CD4-positive, alpha-beta memory T cell (primary cell): ENCODE measurements at regions of chr6 and their contacts with region 1.

Region 1: DNA sequence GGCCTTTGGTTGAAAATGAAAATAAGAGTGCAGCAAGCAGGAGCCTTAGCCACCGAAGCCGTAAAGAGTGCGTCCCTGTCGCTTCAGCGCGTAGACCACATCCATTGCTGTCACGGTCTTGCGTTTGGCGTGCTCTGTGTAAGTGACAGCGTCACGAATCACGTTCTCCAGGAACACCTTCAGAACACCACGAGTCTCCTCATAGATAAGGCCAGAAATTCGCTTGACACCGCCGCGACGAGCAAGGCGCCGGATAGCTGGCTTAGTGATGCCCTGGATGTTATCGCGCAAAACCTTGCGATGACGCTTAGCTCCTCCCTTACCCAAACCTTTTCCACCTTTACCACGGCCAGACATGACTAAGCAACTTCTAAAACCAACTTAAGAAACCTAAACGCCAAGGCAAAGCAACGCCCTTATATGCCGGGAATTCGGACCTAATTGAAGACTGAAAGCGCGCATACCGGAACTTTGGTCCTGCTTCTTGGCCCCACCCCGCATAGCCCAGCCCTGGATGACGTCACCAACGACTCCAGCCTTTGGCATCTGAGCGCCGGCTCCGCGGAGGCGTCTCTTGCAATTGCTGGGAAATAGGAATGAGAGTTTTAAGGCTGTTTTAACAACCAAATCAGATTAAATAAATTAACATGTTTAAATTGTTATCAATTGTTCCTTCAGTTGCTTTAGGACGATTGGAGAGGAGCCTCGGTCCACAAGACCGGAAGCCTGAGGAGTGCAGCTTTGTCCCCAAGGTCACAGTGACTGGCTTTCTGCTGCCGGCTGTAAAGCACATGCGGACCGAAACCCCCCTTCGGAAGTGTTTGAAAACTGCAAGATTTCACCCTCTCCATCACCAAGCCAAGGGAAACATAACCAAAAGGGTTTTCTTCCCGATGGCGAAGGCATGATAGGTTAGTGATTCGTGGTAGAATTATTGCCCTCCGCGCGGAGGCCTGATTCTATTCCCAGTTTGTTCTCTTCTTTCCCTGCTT is 79.6 kb upstream of the BTN3A2 start:
- DNase-seq: peak; percentile 91 to 98 (median 95)
- H3K4me3 ChIP-seq: peak overlapping the region; percentile 51 to 75
- H3K4me3 Mint-ChIP-seq: peak overlapping the region; percentile 83 to 95 (median 91)
- H3K27ac ChIP-seq: peak overlapping the region; percentile 81
- H3K27ac Mint-ChIP-seq: peak overlapping the region; percentile 95 to 99 (median 99)
- H3K4me1 ChIP-seq: peaks cover 13% of the 10 kb centered on the region
- H3K4me1 Mint-ChIP-seq: peaks cover 8 to 34% (median 19%) of the 10 kb centered on the region in 4 donors
- H3K27me3 ChIP-seq: no peaks in the 10 kb centered on the region
- H3K27me3 Mint-ChIP-seq: peaks cover 2 to 9% of the 10 kb centered on the region in 2 donors

Region 2: GRCh38 chr6:26045065-26045927 is 240.1 kb before region 1 on chr6:
- CTCF ChIA-PET with region 1: no interaction called
- POLR2A ChIA-PET with region 1: interaction called, 21 read pairs
- intact Hi-C with region 1: no loop called
- DNase-seq: peak; percentile 88 to 91 (median 90)
- H3K4me3 ChIP-seq: peak overlapping the region; percentile 72 to 74
- H3K4me3 Mint-ChIP-seq: peak overlapping the region; percentile 88 to 98 (median 94)
- H3K27ac ChIP-seq: peak overlapping the region; percentile 76
- H3K27ac Mint-ChIP-seq: peak overlapping the region; percentile 93 to 99 (median 98)
- H3K4me1 ChIP-seq: peaks cover 14% of the 10 kb centered on the region
- H3K4me1 Mint-ChIP-seq: peaks cover 12 to 28% (median 20%) of the 10 kb centered on the region in 4 donors
- H3K27me3 ChIP-seq: no peaks in the 10 kb centered on the region
- H3K27me3 Mint-ChIP-seq: no peaks in the 10 kb centered on the region

Region 3: DNA sequence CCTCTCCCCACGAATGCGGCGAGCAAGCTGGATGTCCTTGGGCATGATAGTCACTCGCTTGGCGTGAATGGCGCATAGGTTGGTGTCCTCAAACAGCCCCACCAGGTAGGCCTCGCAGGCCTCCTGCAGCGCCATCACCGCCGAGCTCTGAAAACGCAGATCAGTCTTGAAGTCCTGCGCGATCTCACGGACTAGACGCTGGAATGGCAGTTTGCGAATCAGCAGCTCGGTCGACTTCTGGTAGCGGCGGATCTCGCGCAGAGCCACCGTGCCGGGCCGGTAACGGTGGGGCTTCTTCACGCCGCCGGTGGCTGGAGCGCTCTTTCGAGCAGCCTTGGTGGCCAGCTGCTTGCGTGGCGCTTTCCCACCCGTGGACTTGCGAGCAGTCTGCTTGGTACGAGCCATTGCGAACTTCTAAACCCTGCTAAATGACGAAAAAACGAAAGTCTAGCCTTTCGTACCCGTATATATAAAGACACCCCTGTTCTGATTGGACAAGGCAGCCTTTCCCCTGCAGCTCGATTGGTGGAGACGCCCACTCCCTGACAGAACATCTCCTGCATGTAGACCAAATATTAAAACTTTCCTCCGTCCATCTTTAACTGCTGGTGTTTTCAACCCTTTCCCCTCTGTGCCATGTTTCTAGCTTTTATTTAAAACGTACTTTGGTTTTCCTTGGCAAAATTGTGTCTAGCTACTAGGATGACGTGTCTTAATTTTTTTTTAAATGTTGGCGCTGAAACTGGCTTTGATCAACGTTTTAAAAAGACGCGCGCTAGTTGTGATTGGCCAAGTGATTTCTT is 88.4 kb before region 1 on chr6:
- CTCF ChIA-PET with region 1: interaction called, 4 read pairs
- POLR2A ChIA-PET with region 1: interaction called, 215 read pairs
- intact Hi-C with region 1: loop called (anchors 1 kb)
- DNase-seq: peak; percentile 92 to 93 (median 92)
- H3K4me3 ChIP-seq: peak overlapping the region; percentile 83 to 97
- H3K4me3 Mint-ChIP-seq: peak overlapping the region; percentile 94 to 99 (median 97)
- H3K27ac ChIP-seq: peak overlapping the region; percentile 84
- H3K27ac Mint-ChIP-seq: peak overlapping the region; percentile 96 to 100 (median 98)
- H3K4me1 ChIP-seq: peaks cover 43% of the 10 kb centered on the region
- H3K4me1 Mint-ChIP-seq: peaks cover 23 to 57% (median 41%) of the 10 kb centered on the region in 4 donors
- H3K27me3 ChIP-seq: no peaks in the 10 kb centered on the region
- H3K27me3 Mint-ChIP-seq: no peaks in the 10 kb centered on the region

Region 4: DNA sequence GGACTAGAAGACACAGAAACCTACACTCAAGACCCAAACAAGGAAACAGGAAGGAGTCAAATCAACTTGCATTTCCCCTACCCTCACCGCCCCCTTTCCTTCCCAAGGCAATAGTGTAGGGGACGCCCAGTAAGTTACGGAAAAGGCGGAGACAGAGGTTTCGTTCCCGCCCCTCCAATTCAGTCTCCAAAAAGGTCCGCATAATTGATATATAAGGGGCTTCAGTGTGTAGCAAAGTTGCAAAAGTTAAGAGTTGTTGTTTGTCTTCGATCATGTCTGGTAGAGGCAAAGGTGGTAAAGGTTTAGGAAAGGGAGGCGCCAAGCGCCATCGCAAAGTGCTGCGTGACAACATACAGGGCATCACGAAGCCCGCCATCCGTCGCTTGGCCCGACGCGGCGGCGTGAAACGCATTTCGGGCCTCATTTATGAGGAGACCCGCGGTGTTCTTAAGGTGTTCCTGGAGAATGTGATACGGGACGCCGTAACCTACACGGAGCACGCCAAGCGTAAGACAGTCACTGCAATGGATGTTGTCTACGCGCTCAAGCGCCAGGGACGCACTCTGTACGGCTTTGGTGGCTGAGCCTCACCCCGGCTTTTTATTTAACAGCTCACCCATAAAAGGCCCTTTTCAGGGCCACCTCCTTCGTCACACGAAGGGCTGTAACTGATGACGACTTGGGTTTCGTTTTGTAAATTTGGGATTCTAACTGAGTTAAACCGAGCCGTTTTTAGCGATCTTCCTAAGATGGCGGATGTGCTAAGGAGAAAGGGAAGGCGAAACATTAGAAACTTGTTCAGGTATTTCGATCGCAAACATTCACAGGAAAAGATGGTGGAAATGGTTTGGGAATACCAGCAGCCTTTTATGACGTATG is 45.0 kb before region 1 on chr6:
- CTCF ChIA-PET with region 1: interaction called, 5 read pairs
- POLR2A ChIA-PET with region 1: interaction called, 127 read pairs
- intact Hi-C with region 1: loop called (anchors 1 kb)
- DNase-seq: peak; percentile 79 to 86 (median 82)
- H3K4me3 ChIP-seq: peak overlapping the region; percentile 66 to 67
- H3K4me3 Mint-ChIP-seq: peak overlapping the region; percentile 80 to 93 (median 87)
- H3K27ac ChIP-seq: peak overlapping the region; percentile 81
- H3K27ac Mint-ChIP-seq: peak overlapping the region; percentile 89 to 99 (median 95)
- H3K4me1 ChIP-seq: peaks cover 11% of the 10 kb centered on the region
- H3K4me1 Mint-ChIP-seq: peaks cover 9 to 29% (median 15%) of the 10 kb centered on the region in 4 donors
- H3K27me3 ChIP-seq: no peaks in the 10 kb centered on the region
- H3K27me3 Mint-ChIP-seq: no peaks in the 10 kb centered on the region

Region 5: DNA sequence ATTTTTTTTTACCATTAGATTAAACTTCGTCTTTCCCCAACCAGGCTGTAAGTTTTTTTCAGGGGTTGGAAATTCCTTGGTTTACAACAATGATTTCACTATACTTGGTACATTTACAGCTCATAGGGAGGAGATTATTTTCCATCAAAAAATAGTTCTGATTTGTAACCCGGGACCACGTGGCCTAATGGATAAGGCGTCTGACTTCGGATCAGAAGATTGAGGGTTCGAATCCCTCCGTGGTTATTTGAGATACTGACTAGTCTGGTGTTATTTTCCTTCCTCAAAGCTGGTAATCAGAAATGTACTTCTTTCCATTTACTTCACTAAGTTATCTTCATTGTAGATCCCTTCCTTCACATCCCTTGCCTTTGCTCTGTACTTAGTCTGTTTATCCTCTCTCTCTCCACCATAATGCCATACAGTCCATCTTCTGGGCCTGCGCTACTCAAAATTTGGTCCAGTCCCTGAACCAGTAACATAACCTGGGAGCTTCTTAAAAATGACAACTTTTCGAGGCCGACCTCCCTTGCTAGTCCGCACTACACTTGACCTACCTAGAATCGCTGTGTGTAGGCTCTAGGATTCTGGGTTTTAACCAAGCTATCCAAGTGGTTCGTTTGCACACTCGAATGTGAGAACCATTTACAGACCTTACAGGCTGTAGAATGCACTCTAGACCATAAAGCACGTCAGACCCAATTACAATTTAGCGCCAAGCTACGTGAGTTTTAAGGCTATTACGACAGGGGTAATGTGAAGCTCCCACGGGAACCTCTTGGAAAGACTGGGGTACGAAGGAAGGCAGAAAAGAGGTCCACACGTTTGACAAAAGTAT is 37.4 kb after region 1 on chr6:
- CTCF ChIA-PET with region 1: no interaction called
- POLR2A ChIA-PET with region 1: interaction called, 17 read pairs
- intact Hi-C with region 1: no loop called
- DNase-seq: peak; percentile 75 to 80 (median 79)
- H3K4me3 ChIP-seq: peak overlapping the region in 1 of 2 donors; percentile 62
- H3K4me3 Mint-ChIP-seq: peak overlapping the region; percentile 86 to 92 (median 88)
- H3K27ac ChIP-seq: no peak overlapping the region
- H3K27ac Mint-ChIP-seq: peak overlapping the region; percentile 42 to 98 (median 82)
- H3K4me1 ChIP-seq: peaks cover 12% of the 10 kb centered on the region
- H3K4me1 Mint-ChIP-seq: peaks cover 19 to 30% (median 24%) of the 10 kb centered on the region in 4 donors
- H3K27me3 ChIP-seq: no peaks in the 10 kb centered on the region
- H3K27me3 Mint-ChIP-seq: peaks cover 8 to 22% of the 10 kb centered on the region in 2 donors

Region 6: DNA sequence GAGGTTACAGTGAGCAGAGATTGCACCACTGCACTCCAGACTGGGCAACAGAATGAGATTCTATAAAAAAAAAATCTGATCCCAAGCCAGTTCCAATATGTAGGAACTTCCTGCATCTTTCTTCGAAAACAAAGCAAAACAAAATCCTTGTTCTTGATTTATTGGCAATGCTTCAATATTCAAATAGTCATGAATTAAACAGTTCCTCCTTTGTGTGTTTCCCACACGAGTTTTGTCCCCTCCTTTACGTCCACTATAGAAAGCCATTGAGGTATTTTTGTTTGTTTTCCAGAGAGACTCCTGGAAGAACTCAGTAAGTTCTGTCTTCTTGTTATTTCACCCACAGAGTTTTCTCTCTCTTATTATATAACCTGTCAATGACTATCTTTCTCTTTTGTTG is 222.2 kb after region 1 on chr6:
- CTCF ChIA-PET with region 1: no interaction called
- POLR2A ChIA-PET with region 1: no interaction called
- intact Hi-C with region 1: no loop called
- DNase-seq: no peak
- H3K4me3 ChIP-seq: no peak overlapping the region
- H3K4me3 Mint-ChIP-seq: no peak overlapping the region
- H3K27ac ChIP-seq: no peak overlapping the region
- H3K27ac Mint-ChIP-seq: no peak overlapping the region
- H3K4me1 ChIP-seq: no peaks in the 10 kb centered on the region
- H3K4me1 Mint-ChIP-seq: no peaks in the 10 kb centered on the region
- H3K27me3 ChIP-seq: peaks cover 6% of the 10 kb centered on the region
- H3K27me3 Mint-ChIP-seq: peaks cover 4 to 6% of the 10 kb centered on the region in 2 donors

Region 7: DNA sequence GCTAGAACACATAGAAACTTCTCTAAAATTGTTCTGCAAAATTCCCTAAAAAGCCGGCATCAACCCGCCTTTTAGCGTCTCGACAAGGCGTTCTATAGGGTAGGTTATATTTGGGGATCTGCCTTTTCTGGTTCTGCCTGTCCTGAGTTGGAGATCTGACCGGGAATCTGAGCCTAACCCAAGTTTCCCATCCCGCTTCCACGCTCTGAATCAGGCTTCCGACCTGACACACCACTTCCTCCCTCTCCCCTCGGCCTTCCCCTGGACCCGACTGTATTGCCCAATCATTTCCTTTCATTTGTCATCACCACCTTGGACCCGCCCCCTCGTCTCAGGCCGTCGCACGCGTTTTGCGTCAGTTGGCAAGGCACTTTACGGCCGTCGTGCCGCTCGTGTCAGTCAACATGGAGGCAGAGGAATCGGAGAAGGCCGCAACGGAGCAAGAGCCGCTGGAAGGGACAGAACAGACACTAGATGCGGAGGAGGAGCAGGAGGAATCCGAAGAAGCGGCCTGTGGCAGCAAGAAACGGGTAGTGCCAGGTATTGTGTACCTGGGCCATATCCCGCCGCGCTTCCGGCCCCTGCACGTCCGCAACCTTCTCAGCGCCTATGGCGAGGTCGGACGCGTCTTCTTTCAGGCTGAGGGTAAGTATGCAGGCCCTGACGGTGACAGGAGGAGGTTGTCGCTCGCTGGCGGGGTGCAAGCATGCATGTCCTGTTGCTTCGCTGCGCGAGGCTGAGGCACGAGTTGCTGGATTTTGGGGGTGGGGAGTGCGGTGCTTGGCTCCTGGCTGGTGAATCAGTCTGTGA is 311.3 kb after region 1 on chr6 and contains the start of gene ABT1:
- CTCF ChIA-PET with region 1: interaction called, 8 read pairs
- POLR2A ChIA-PET with region 1: interaction called, 11 read pairs
- intact Hi-C with region 1: no loop called
- DNase-seq: peak; percentile 95 to 98 (median 96)
- H3K4me3 ChIP-seq: peak within 1 kb of the TSS; percentile 76 to 98
- H3K4me3 Mint-ChIP-seq: no peak within 1 kb of the TSS
- H3K27ac ChIP-seq: peak within 1 kb of the TSS; percentile 91
- H3K27ac Mint-ChIP-seq: peak within 1 kb of the TSS in 3 of 7 donors; percentile 80 to 92 (median 88)
- H3K4me1 ChIP-seq: peaks cover 24% of the 10 kb centered on the region
- H3K4me1 Mint-ChIP-seq: peaks cover 0 to 16% (median 8%) of the 10 kb centered on the region in 4 donors
- H3K27me3 ChIP-seq: no peaks in the 10 kb centered on the region
- H3K27me3 Mint-ChIP-seq: peaks cover 15 to 22% of the 10 kb centered on the region in 2 donors
- total RNA-seq, gene ABT1: 33.5 to 34.8 TPM

Region 8: DNA sequence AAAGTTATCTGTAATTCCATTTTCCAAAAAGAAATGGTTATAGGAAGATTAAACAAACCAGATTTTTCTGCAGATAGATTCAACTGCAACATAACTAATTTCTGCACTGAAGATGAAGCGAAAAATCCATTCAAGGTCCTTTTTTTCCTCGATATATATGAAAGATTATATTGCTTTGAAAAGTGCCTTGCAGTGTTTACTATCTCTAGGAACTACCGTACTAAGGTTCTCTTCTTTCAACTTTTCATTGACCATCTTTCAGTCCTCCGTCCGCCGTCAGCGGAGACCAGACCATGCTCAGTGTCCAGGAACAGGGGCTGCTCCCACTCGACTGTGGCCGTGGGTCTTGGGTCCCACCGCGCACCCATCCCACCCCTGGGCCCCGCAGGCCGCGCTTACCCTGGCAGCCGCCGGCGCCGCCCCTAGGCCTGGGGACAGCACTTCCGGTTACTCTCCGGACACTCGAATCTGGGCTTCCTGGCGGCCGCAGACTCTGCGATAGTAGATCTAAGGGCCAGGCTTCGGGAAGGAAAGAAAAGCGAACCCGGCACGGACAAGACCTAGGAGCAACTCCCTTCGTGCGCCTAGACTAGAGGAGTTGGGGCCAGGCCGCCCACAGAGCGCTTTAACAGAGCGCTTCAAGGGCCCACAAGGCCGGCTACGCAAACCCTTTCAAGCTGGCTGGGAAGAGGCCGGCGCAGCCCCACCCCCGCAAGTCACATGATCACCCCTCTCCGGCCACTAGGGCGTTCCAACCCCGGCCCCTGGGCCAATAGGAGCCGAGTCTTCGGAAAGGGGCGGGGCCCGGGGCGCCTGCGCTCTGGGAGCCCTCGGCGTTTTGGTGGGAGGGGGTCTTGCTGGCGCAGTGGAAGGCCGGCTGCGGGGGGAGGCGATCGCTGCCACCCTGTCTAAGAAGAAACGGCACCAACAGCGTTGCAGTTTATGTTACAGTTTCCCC is 373.9 kb after region 1 on chr6 and contains the start of gene ZNF322:
- CTCF ChIA-PET with region 1: no interaction called
- POLR2A ChIA-PET with region 1: no interaction called
- intact Hi-C with region 1: no loop called
- DNase-seq: peak; percentile 72 to 84 (median 77)
- H3K4me3 ChIP-seq: peak within 1 kb of the TSS; percentile 44 to 57
- H3K4me3 Mint-ChIP-seq: peak within 1 kb of the TSS; percentile 56 to 97 (median 86)
- H3K27ac ChIP-seq: peak within 1 kb of the TSS; percentile 68
- H3K27ac Mint-ChIP-seq: peak within 1 kb of the TSS; percentile 1 to 93 (median 54)
- H3K4me1 ChIP-seq: peaks cover 22% of the 10 kb centered on the region
- H3K4me1 Mint-ChIP-seq: peaks cover 18 to 31% (median 26%) of the 10 kb centered on the region in 4 donors
- H3K27me3 ChIP-seq: peaks cover 7% of the 10 kb centered on the region
- H3K27me3 Mint-ChIP-seq: peaks cover 17 to 19% of the 10 kb centered on the region in 2 donors
- total RNA-seq, gene ZNF322: 19.6 to 23.1 TPM

Region 9: DNA sequence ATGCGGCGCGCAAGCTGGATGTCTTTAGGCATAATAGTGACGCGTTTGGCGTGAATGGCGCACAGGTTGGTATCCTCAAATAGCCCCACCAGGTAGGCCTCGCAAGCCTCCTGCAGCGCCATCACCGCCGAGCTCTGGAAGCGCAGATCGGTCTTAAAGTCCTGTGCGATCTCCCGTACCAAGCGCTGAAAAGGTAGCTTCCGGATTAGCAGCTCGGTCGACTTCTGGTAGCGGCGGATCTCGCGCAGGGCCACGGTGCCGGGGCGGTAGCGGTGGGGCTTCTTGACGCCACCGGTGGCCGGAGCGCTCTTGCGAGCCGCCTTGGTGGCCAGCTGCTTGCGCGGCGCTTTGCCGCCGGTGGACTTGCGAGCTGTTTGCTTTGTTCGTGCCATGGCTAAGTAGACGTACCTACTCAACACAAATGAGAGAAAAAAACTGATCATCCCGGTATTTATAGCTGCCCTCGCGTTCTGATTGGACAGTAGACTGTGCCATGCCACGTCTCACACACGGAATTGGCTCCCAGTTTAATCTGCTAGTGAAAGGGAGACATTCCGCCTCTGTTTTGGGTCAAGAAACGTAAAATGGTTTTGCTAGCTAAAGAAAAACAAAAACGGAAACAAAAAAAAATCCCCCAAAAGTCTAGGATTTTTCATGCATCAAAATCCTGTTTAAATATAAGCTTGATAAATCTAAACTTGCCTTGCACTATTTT is 1586.6 kb after region 1 on chr6:
- CTCF ChIA-PET with region 1: no interaction called
- POLR2A ChIA-PET with region 1: interaction called, 18 read pairs
- intact Hi-C with region 1: no loop called
- DNase-seq: peak; percentile 91 to 96 (median 94)
- H3K4me3 ChIP-seq: peak overlapping the region; percentile 77 to 89
- H3K4me3 Mint-ChIP-seq: peak overlapping the region; percentile 87 to 94 (median 90)
- H3K27ac ChIP-seq: peak overlapping the region; percentile 86
- H3K27ac Mint-ChIP-seq: peak overlapping the region; percentile 89 to 97 (median 94)
- H3K4me1 ChIP-seq: peaks cover 33% of the 10 kb centered on the region
- H3K4me1 Mint-ChIP-seq: peaks cover 24 to 48% (median 33%) of the 10 kb centered on the region in 4 donors
- H3K27me3 ChIP-seq: no peaks in the 10 kb centered on the region
- H3K27me3 Mint-ChIP-seq: no peaks in the 10 kb centered on the region